Naive thymus-derived CD4-positive, alpha-beta T cell (primary cell): ENCODE measurements at regions of chr7 and their contacts with region 1.

Region 1: GRCh38 chr7:105036217-105037168 is 22.5 kb downstream of the KMT2E start:
- DNase-seq: no peak
- ATAC-seq: peak; percentile 19
- H3K4me3 ChIP-seq: no peak overlapping the region
- H3K4me3 Mint-ChIP-seq: peak overlapping the region in 8 of 10 donors; percentile 6 to 74 (median 44)
- H3K27ac ChIP-seq: no peak overlapping the region
- H3K27ac Mint-ChIP-seq: peak overlapping the region in 7 of 9 donors; percentile 18 to 70 (median 41)
- H3K4me1 ChIP-seq: peaks cover 31 to 35% of the 10 kb centered on the region in 2 donors
- H3K4me1 Mint-ChIP-seq: peaks cover 29 to 77% (median 63%) of the 10 kb centered on the region in 7 donors
- H3K27me3 ChIP-seq: no peaks in the 10 kb centered on the region
- H3K27me3 Mint-ChIP-seq: no peaks in the 10 kb centered on the region

Region 2: DNA sequence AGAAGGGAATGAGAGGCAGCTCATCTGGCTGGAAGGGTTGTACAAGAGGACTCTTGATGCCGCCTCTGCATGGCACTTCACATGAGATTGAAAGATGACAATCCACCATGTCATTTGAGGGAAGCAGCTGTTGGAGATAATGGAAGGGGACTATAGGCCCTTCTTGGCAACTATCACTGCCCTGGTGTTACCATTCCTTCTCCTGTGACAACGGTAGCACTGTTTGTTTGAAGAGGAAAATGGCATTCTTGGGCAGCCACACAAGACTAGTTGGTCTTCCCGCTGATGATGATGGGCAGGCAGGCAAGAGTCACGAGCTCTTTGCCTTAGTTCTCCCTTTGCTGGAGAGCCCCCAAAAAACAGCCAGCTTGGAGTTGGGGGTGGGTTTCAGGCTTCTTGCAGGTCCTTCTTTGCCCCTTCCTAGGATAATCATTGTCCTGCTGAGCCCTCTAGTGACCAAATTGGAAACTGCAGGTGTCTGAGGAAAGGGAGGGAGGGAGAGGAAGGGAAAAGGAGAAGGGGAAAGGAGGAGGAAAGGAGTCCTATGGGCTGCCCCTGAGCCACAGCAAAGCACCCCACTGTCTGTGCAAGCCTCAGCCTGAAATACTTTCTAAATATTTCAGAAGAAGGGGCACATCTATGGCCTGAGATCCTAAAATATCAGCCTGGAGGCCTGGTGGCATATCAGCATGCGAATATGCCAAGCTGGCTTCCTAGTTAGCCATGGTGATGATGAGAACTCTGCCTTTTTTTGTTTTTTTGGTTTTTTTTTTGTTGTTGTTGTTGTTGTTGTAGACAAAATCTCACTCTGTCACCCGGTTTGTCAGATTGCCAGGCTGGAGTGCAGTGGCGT is 188.1 kb before region 1 on chr7:
- CTCF ChIA-PET with region 1: no interaction called
- POLR2A ChIA-PET with region 1: no interaction called
- intact Hi-C with region 1: no loop called
- DNase-seq: peak in 8 of 9 donors; percentile 14 to 60 (median 33)
- ATAC-seq: peak; percentile 61
- H3K4me3 ChIP-seq: no peak overlapping the region
- H3K4me3 Mint-ChIP-seq: no peak overlapping the region
- H3K27ac ChIP-seq: no peak overlapping the region
- H3K27ac Mint-ChIP-seq: no peak overlapping the region
- H3K4me1 ChIP-seq: no peaks in the 10 kb centered on the region
- H3K4me1 Mint-ChIP-seq: peaks cover 0 to 2% (median 0%) of the 10 kb centered on the region in 7 donors
- H3K27me3 ChIP-seq: no peaks in the 10 kb centered on the region
- H3K27me3 Mint-ChIP-seq: peaks cover 5 to 26% (median 12%) of the 10 kb centered on the region in 5 donors

Region 3: DNA sequence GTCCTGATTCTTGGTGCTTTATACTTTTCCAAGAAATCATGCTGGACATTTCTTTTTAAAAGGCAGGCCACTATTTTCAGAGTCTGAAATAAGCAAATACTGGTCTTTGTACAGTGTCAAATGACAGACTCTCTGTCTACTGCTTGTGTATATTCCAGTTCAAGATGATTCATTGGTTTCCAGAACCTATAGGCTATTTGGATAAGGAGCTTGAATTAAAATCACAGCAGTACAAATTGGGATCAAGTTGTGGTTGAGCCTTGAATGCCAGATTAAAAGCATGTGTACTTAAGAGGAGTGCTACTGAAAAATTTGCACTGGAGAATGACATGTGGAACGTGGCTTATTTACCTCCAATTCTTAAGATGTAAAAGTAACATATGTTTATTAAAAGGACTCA is 11.8 kb before region 1 on chr7:
- CTCF ChIA-PET with region 1: interaction called, 4 read pairs
- POLR2A ChIA-PET with region 1: no interaction called
- intact Hi-C with region 1: loop called in 1 of 2 experiments (anchors 1 kb)
- DNase-seq: no peak
- ATAC-seq: no peak
- H3K4me3 ChIP-seq: no peak overlapping the region
- H3K4me3 Mint-ChIP-seq: peak overlapping the region in 8 of 10 donors; percentile 29 to 96 (median 58)
- H3K27ac ChIP-seq: no peak overlapping the region
- H3K27ac Mint-ChIP-seq: peak overlapping the region in 2 of 9 donors; percentile 28 to 50
- H3K4me1 ChIP-seq: peaks cover 67 to 74% of the 10 kb centered on the region in 2 donors
- H3K4me1 Mint-ChIP-seq: peaks cover 63 to 99% (median 92%) of the 10 kb centered on the region in 7 donors
- H3K27me3 ChIP-seq: no peaks in the 10 kb centered on the region
- H3K27me3 Mint-ChIP-seq: no peaks in the 10 kb centered on the region

Region 4: GRCh38 chr7:105198223-105198622 is 161.7 kb after region 1 on chr7:
- CTCF ChIA-PET with region 1: no interaction called
- POLR2A ChIA-PET with region 1: no interaction called
- intact Hi-C with region 1: no loop called
- DNase-seq: no peak
- ATAC-seq: no peak
- H3K4me3 ChIP-seq: no peak overlapping the region
- H3K4me3 Mint-ChIP-seq: peak overlapping the region in 1 of 10 donors; percentile 2
- H3K27ac ChIP-seq: no peak overlapping the region
- H3K27ac Mint-ChIP-seq: peak overlapping the region in 1 of 9 donors; percentile 41
- H3K4me1 ChIP-seq: no peaks in the 10 kb centered on the region
- H3K4me1 Mint-ChIP-seq: peaks cover 12 to 48% (median 27%) of the 10 kb centered on the region in 7 donors
- H3K27me3 ChIP-seq: no peaks in the 10 kb centered on the region
- H3K27me3 Mint-ChIP-seq: no peaks in the 10 kb centered on the region